Ovary (tissue), 10 donors: ENCODE measurements at regions of chr1 and their contacts with region 1.

Region 1: DNA sequence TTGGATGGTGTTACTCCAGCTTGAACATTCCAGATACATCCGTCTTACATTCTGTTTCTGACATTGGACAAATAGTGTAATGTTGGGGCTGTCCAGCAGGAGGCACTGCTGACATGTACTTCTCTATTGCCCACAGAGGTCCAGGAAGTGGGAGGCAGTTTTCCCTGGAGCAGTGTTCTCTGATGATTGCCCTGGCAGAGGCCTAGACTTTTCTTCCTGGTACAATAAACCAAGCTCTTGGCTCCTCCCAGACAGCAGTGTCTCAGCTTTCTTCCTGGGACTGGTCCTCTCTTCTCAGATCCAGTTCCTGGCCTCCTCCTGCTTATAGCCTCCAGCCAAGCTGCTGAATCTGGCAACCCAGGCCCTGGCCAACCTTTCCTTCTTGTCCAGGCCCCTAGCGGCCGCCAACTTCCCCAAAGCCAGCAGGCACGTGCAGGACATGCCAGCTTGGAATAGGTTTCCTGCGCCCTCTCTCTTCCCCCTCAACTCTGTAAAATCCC is 14.9 kb upstream of the IFNLR1 start:
- DNase-seq: peak in 3 of 5 donors; percentile 34 to 63 (median 56)
- H3K4me3 ChIP-seq: no peak overlapping the region
- H3K27ac ChIP-seq: no peak overlapping the region
- H3K4me1 ChIP-seq: no peaks in the 10 kb centered on the region
- H3K27me3 ChIP-seq: no peaks in the 10 kb centered on the region
- CTCF ChIP-seq: peak in 1 of 3 donors; percentile 33
- EP300 ChIP-seq: no peak
- POLR2A ChIP-seq: no peak

Region 2: DNA sequence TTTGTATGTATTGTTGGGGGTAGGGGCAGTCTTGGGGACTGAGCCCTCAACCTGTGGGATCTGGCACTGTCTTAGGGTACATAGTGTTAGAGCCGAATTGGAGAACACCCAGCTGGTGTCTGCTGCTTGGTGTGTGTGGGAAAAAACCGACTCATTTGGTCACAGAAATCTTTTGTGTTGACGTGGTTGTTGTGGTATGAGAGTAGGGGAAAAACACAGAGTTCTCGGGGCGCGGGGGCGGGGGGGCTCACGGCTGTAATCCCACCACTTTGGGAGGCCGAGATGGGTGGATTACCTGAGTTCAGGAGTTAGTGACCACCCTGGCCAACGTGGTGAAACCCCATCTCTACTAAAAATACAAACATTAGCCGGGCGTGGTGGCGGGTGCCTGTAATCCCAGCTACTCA is 206.6 kb before region 1 on chr1:
- intact Hi-C with region 1: no loop called
- DNase-seq: no peak
- H3K4me3 ChIP-seq: no peak overlapping the region
- H3K27ac ChIP-seq: no peak overlapping the region
- H3K4me1 ChIP-seq: no peaks in the 10 kb centered on the region
- H3K27me3 ChIP-seq: no peaks in the 10 kb centered on the region
- CTCF ChIP-seq: no peak
- EP300 ChIP-seq: no peak
- POLR2A ChIP-seq: no peak

Region 3: GRCh38 chr1:24385160-24385940 is 183.4 kb after region 1 on chr1:
- intact Hi-C with region 1: loop called (anchors 2 to 5 kb)
- DNase-seq: no peak
- H3K4me3 ChIP-seq: no peak overlapping the region
- H3K27ac ChIP-seq: no peak overlapping the region
- H3K4me1 ChIP-seq: no peaks in the 10 kb centered on the region
- H3K27me3 ChIP-seq: no peaks in the 10 kb centered on the region
- CTCF ChIP-seq: no peak
- EP300 ChIP-seq: no peak
- POLR2A ChIP-seq: no peak

Region 4: DNA sequence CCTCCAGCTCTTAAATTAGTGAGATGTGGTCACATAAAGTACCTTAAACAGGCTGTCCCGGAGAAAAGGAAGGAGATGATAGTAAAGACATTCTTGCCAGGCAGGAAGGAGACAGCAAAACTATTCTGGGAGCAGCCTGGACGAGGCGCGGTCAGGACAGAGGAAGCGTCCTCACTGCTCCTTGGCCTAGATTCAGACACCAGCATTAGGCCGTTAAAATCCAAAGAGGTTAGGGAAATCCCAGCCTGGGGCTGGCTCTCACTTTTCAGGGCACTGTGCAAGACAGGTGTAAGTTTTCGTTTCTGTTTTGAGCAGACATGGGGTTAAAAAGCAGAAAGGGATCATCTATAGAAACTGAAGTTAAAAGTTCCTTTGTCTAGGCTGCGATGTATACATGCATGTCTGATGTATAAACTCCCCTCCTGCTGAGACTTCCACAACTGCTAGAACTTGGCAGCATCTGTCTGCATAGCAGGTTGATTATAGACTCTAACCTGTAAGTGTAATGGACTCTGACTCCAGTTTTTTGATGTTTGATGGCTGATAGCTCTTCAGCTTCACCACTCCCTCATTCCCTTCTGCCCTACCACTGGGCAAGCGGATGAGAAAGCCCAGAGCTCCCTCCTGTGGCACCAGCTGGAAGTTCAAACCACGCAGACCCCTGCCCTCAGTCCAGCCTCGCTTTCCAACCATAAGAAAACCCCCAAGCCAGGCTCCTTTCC is 190.1 kb after region 1 on chr1:
- intact Hi-C with region 1: loop called (anchors 2 to 5 kb)
- DNase-seq: peak; percentile 24 to 67 (median 52)
- H3K4me3 ChIP-seq: no peak overlapping the region
- H3K27ac ChIP-seq: peak overlapping the region; percentile 13 to 68
- H3K4me1 ChIP-seq: no peaks in the 10 kb centered on the region
- H3K27me3 ChIP-seq: no peaks in the 10 kb centered on the region
- CTCF ChIP-seq: peak in 2 of 3 donors; percentile 37
- EP300 ChIP-seq: no peak
- POLR2A ChIP-seq: no peak

Region 5: GRCh38 chr1:24635195-24635843 is 433.3 kb after region 1 on chr1:
- intact Hi-C with region 1: loop called in 3 of 4 experiments (anchors 5 to 10 kb)
- DNase-seq: no peak
- H3K4me3 ChIP-seq: no peak overlapping the region
- H3K27ac ChIP-seq: no peak overlapping the region
- H3K4me1 ChIP-seq: no peaks in the 10 kb centered on the region
- H3K27me3 ChIP-seq: no peaks in the 10 kb centered on the region
- CTCF ChIP-seq: no peak
- EP300 ChIP-seq: no peak
- POLR2A ChIP-seq: no peak